GM12878 (cell line): ENCODE measurements at regions of chr15 and their contacts with region 1.

Region 1: GRCh38 chr15:78308422-78309032 is 9.1 kb upstream of the SKIC8 start:
- DNase-seq: no peak
- ATAC-seq: peak; percentile 96
- H3K4me3 ChIP-seq: no peak overlapping the region
- H3K27ac ChIP-seq: no peak overlapping the region
- H3K4me1 ChIP-seq: no peaks in the 10 kb centered on the region
- H3K27me3 ChIP-seq: no peaks in the 10 kb centered on the region
- CTCF ChIP-seq: peak; percentile 74 to 95 (median 90)
- EP300 ChIP-seq: no peak
- POLR2A ChIP-seq: no peak
- RAD21 ChIP-seq: peak; percentile 85

Region 2: DNA sequence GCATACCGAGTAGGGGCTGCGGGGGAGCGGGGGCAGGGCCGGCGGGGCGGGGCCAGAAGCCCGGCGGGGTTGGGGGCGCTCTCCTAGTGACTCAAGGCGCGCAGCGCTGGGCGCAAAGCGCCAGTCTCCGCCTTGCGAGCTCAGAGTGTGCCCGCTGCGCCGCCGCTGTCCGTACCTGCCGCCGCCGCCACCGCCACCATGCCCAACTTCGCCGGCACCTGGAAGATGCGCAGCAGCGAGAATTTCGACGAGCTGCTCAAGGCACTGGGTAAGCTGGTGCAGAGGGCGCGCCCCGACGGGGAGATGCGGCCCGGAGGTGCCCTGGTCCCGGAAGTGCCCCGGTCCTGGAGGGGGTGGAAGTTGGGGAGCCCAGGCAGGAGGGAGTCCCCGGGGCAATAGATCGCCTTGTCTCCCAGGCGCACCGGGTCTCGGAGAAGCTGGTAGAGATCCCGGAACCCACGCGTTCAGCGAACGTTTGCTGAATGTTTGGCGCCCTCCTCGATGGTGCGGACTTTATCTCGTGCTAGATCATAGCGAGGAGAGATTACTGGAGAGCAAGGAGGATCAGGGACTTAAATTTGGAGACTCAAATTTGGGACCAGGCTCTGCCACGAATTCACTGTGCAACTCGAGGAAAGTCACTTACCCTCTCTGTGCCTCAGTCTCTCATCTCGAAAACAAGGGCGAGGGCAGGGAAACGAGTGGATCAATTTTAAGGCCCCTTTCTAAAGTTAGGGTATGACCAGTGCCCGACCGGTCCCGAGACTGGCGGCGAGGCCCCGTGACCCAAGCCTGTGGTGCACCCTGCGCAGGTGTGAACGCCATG is 31.9 kb after region 1 on chr15 and contains the start of gene CRABP1:
- CTCF ChIA-PET with region 1: no interaction called
- POLR2A ChIA-PET with region 1: no interaction called
- RAD21 ChIA-PET with region 1: no interaction called
- SMC1A ChIA-PET with region 1: no interaction called
- in situ Hi-C with region 1: no loop called
- intact Hi-C with region 1: no loop called
- DNase-seq: no peak
- ATAC-seq: no peak
- H3K4me3 ChIP-seq: no peak within 1 kb of the TSS
- H3K27ac ChIP-seq: no peak within 1 kb of the TSS
- H3K4me1 ChIP-seq: no peaks in the 10 kb centered on the region
- H3K27me3 ChIP-seq: peaks cover 11 to 16% of the 10 kb centered on the region in 2 experiments
- CTCF ChIP-seq: no peak
- EP300 ChIP-seq: no peak
- POLR2A ChIP-seq: no peak
- RAD21 ChIP-seq: no peak
- polyA plus RNA-seq, gene CRABP1: not detected

Region 3: GRCh38 chr15:78415286-78415685 is 106.8 kb after region 1 on chr15:
- CTCF ChIA-PET with region 1: interaction called, 175 read pairs
- POLR2A ChIA-PET with region 1: no interaction called
- RAD21 ChIA-PET with region 1: interaction called, 11 read pairs
- SMC1A ChIA-PET with region 1: interaction called, 4 read pairs
- in situ Hi-C with region 1: loop called (anchors 10 kb)
- intact Hi-C with region 1: no loop called
- DNase-seq: no peak
- ATAC-seq: peak; percentile 70
- H3K4me3 ChIP-seq: no peak overlapping the region
- H3K27ac ChIP-seq: no peak overlapping the region
- H3K4me1 ChIP-seq: no peaks in the 10 kb centered on the region
- H3K27me3 ChIP-seq: no peaks in the 10 kb centered on the region; a peak in 1 of 4 replicates
- CTCF ChIP-seq: peak in 1 of 3 experiments; percentile 41; a peak in 2 of 6 replicates
- EP300 ChIP-seq: no peak
- POLR2A ChIP-seq: no peak
- RAD21 ChIP-seq: peak; percentile 46

Region 4: DNA sequence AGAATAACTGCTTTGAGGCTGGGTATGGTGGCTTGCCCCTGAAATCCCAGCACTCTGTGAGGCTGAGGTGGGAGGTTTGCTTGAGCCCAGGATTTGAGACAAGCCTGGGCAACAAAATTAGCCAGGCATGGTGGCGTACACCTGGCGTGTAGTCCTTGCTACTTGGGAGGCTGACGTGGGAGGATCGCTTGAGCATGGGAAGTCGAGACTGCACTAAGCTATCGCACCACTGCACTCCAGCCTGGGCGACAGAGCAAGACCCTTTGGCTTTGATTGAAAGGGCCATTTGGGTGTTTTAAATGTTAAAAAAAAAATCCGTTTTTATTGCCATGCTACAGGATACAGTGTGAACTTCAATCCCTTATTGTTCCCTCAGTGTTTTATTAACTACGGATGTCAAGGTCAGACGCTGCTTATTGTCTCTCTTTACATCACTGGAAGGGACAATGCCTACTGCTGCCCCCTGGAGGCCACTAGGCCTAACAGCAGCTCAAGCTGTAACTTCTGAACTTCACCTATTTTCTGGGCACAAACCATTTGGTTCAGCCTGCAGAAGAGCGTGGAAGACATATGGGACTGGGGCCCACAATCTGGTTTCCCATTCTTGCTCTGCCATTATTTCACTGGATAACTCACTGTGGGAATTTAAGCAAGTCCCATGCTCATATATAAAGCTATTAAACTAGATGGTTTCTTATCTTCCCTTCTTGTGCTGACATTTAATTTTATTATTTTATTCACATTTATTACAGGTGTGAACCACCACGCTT is 114.2 kb after region 1 on chr15:
- CTCF ChIA-PET with region 1: interaction called, 175 read pairs
- POLR2A ChIA-PET with region 1: no interaction called
- RAD21 ChIA-PET with region 1: interaction called, 8 read pairs
- SMC1A ChIA-PET with region 1: interaction called, 31 read pairs
- in situ Hi-C with region 1: loop called (anchors 10 kb)
- intact Hi-C with region 1: loop called (anchors 1 kb)
- DNase-seq: no peak
- ATAC-seq: peak; percentile 90
- H3K4me3 ChIP-seq: no peak overlapping the region
- H3K27ac ChIP-seq: no peak overlapping the region
- H3K4me1 ChIP-seq: no peaks in the 10 kb centered on the region
- H3K27me3 ChIP-seq: no peaks in the 10 kb centered on the region
- CTCF ChIP-seq: peak; percentile 90 to 94 (median 94)
- EP300 ChIP-seq: no peak
- POLR2A ChIP-seq: no peak
- RAD21 ChIP-seq: peak; percentile 69

Region 5: DNA sequence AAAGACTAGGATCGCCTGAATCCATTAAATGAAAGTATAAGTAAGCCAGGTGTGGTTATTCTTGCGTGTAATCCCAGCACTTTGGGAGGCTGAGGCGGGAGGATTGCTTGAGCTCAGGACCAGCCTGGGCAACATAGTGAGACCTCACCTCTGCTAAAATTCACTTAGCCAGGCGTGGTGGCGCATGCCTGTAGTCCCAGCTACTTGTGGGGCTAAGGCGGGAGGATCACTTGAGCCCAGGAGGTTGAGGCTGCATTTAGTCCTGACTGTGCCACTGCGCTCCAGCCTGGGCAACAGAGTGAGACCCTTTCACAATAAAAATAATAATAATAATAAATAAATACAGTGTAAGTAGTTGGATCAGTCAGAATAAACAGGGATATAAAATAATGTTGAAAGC is 173.4 kb after region 1 on chr15:
- CTCF ChIA-PET with region 1: no interaction called
- POLR2A ChIA-PET with region 1: no interaction called
- RAD21 ChIA-PET with region 1: no interaction called
- SMC1A ChIA-PET with region 1: no interaction called
- in situ Hi-C with region 1: no loop called
- intact Hi-C with region 1: loop called (anchors 5 kb)
- DNase-seq: no peak
- ATAC-seq: no peak
- H3K4me3 ChIP-seq: no peak overlapping the region
- H3K27ac ChIP-seq: no peak overlapping the region
- H3K4me1 ChIP-seq: no peaks in the 10 kb centered on the region
- H3K27me3 ChIP-seq: no peaks in the 10 kb centered on the region
- CTCF ChIP-seq: no peak
- EP300 ChIP-seq: no peak
- POLR2A ChIP-seq: no peak
- RAD21 ChIP-seq: no peak

Region 6: GRCh38 chr15:78709263-78709882 is 400.8 kb after region 1 on chr15:
- CTCF ChIA-PET with region 1: interaction called, 4 read pairs
- POLR2A ChIA-PET with region 1: no interaction called
- RAD21 ChIA-PET with region 1: no interaction called
- SMC1A ChIA-PET with region 1: interaction called, 3 read pairs
- in situ Hi-C with region 1: no loop called
- intact Hi-C with region 1: loop called (anchors 5 kb)
- DNase-seq: no peak
- ATAC-seq: peak; percentile 99
- H3K4me3 ChIP-seq: no peak overlapping the region
- H3K27ac ChIP-seq: no peak overlapping the region
- H3K4me1 ChIP-seq: no peaks in the 10 kb centered on the region
- H3K27me3 ChIP-seq: 0 out of 4 replicates have a peak, but pooled peaks cover 2% of the 10 kb centered on the region in 2 experiments
- CTCF ChIP-seq: peak; percentile 82 to 96 (median 85)
- EP300 ChIP-seq: no peak
- POLR2A ChIP-seq: no peak
- RAD21 ChIP-seq: peak; percentile 91